CD8-positive, alpha-beta T cell (primary cell): ENCODE measurements at regions of chr4 and their contacts with region 1.

Region 1: DNA sequence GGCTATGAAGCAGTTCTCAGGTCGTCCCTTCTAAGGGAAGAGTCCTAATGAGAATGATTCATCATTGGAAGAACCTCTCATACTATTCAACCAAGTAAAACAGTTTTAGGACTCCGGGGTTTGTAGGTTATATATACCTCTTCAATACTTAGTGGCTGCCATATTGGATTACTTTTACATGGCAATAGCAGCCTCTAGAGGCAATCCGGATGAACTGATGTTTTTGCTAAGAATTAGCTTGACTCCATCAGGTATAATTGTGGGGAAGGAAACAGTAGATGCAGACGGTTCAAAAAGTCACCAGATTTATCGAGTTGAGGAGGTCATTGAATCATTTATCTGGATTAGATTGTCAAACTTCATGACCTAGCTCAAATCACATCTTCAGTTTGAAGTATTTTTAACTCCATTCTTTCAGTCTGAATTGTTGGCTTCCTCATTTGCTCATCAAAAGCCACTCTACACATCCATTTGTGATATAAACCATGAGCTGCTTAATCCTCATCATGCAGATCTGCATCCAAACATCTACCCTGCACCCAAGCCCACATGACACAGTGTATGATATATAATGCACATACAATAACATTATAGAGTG is 28.4 kb downstream of the GUCY1B1 start:
- DNase-seq: peak in 2 of 9 experiments; percentile 14 to 54
- ATAC-seq: peak; percentile 51
- H3K4me3 ChIP-seq: no peak overlapping the region
- H3K4me3 Mint-ChIP-seq: no peak overlapping the region
- H3K27ac ChIP-seq: no peak overlapping the region
- H3K27ac Mint-ChIP-seq: no peak overlapping the region
- H3K4me1 ChIP-seq: no peaks in the 10 kb centered on the region
- H3K4me1 Mint-ChIP-seq: no peaks in the 10 kb centered on the region
- H3K27me3 ChIP-seq: no peaks in the 10 kb centered on the region
- H3K27me3 Mint-ChIP-seq: no peaks in the 10 kb centered on the region
- CTCF ChIP-seq: peak; percentile 42

Region 2: GRCh38 chr4:154982187-154983047 is 804.8 kb before region 1 on chr4:
- CTCF ChIA-PET with region 1: no interaction called
- POLR2A ChIA-PET with region 1: no interaction called
- intact Hi-C with region 1: loop called in 1 of 2 experiments (anchors 5 kb)
- DNase-seq: peak in 5 of 9 experiments; percentile 15 to 48 (median 21)
- ATAC-seq: no peak
- H3K4me3 ChIP-seq: no peak overlapping the region
- H3K4me3 Mint-ChIP-seq: no peak overlapping the region
- H3K27ac ChIP-seq: no peak overlapping the region
- H3K27ac Mint-ChIP-seq: no peak overlapping the region
- H3K4me1 ChIP-seq: no peaks in the 10 kb centered on the region
- H3K4me1 Mint-ChIP-seq: no peaks in the 10 kb centered on the region
- H3K27me3 ChIP-seq: no peaks in the 10 kb centered on the region
- H3K27me3 Mint-ChIP-seq: no peaks in the 10 kb centered on the region
- CTCF ChIP-seq: peak; percentile 28

Region 3: GRCh38 chr4:155442267-155443105 is 344.7 kb before region 1 on chr4:
- CTCF ChIA-PET with region 1: interaction called, 6 read pairs
- POLR2A ChIA-PET with region 1: no interaction called
- intact Hi-C with region 1: loop called (anchors 1 kb)
- DNase-seq: peak; percentile 4 to 62 (median 48)
- ATAC-seq: peak; percentile 56
- H3K4me3 ChIP-seq: no peak overlapping the region
- H3K4me3 Mint-ChIP-seq: no peak overlapping the region
- H3K27ac ChIP-seq: no peak overlapping the region
- H3K27ac Mint-ChIP-seq: no peak overlapping the region
- H3K4me1 ChIP-seq: no peaks in the 10 kb centered on the region
- H3K4me1 Mint-ChIP-seq: no peaks in the 10 kb centered on the region
- H3K27me3 ChIP-seq: no peaks in the 10 kb centered on the region
- H3K27me3 Mint-ChIP-seq: peaks cover 13% of the 10 kb centered on the region
- CTCF ChIP-seq: peak; percentile 89

Region 4: DNA sequence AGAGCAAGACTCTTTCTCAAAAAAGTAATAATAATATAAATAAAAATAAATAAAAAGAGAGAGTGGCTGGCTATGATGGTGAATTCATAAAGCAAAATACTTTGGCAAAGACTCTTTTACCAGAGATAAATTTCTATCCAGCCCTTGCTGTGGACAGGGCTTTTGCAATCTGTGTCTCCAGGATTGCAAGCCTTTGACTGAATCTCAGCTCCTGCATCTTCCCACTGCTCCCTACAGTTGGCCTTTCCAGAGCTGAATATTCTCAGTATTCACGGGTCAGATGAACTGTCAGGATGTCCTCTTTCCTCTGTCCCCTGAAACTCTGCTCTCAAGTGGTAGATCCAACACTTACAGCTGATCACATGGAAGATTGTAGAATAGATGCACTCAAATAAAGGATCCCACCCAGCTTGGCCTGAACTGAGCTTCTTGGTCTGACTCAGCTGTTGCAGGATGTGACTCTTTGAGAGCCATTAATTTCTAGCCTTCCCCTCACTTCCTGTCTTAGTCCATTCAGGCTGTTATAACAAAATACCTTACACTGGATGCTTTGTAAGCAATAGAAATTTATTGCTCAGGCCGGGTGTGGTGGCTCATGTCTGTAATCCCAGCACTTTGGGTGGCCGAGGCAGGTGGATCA is 244.0 kb before region 1 on chr4:
- CTCF ChIA-PET with region 1: no interaction called
- POLR2A ChIA-PET with region 1: no interaction called
- intact Hi-C with region 1: no loop called
- DNase-seq: no peak
- ATAC-seq: no peak
- H3K4me3 ChIP-seq: no peak overlapping the region
- H3K4me3 Mint-ChIP-seq: no peak overlapping the region
- H3K27ac ChIP-seq: no peak overlapping the region
- H3K27ac Mint-ChIP-seq: no peak overlapping the region
- H3K4me1 ChIP-seq: no peaks in the 10 kb centered on the region
- H3K4me1 Mint-ChIP-seq: no peaks in the 10 kb centered on the region
- H3K27me3 ChIP-seq: no peaks in the 10 kb centered on the region
- H3K27me3 Mint-ChIP-seq: no peaks in the 10 kb centered on the region
- CTCF ChIP-seq: no peak

Region 5: DNA sequence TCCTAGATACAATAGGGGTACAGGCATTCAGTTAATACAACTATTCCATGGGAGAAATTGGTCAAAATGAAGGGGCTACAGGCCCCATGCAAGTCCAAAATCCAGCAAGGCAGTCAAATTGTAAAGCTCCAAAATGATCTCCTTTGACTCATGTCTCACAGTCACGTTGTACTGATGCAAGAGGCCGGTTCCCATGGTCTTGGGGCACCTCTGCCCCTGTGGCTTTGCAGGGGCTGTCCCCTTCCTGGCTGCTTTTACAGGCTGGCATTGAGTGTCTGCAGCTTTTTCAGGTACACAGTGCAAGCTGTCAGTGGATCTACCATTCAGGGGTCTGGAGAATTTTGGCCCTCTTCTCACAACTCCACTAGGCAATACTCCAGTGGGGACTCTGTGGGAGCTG is 91.4 kb after region 1 on chr4:
- CTCF ChIA-PET with region 1: no interaction called
- POLR2A ChIA-PET with region 1: no interaction called
- intact Hi-C with region 1: no loop called
- DNase-seq: no peak
- ATAC-seq: no peak
- H3K4me3 ChIP-seq: no peak overlapping the region
- H3K4me3 Mint-ChIP-seq: no peak overlapping the region
- H3K27ac ChIP-seq: no peak overlapping the region
- H3K27ac Mint-ChIP-seq: no peak overlapping the region
- H3K4me1 ChIP-seq: no peaks in the 10 kb centered on the region
- H3K4me1 Mint-ChIP-seq: no peaks in the 10 kb centered on the region
- H3K27me3 ChIP-seq: no peaks in the 10 kb centered on the region
- H3K27me3 Mint-ChIP-seq: no peaks in the 10 kb centered on the region
- CTCF ChIP-seq: no peak

Region 6: GRCh38 chr4:156638925-156639605 is 851.9 kb after region 1 on chr4:
- CTCF ChIA-PET with region 1: no interaction called
- POLR2A ChIA-PET with region 1: no interaction called
- intact Hi-C with region 1: no loop called
- DNase-seq: no peak
- ATAC-seq: no peak
- H3K4me3 ChIP-seq: no peak overlapping the region
- H3K4me3 Mint-ChIP-seq: no peak overlapping the region
- H3K27ac ChIP-seq: no peak overlapping the region
- H3K27ac Mint-ChIP-seq: no peak overlapping the region
- H3K4me1 ChIP-seq: no peaks in the 10 kb centered on the region
- H3K4me1 Mint-ChIP-seq: no peaks in the 10 kb centered on the region
- H3K27me3 ChIP-seq: no peaks in the 10 kb centered on the region
- H3K27me3 Mint-ChIP-seq: no peaks in the 10 kb centered on the region
- CTCF ChIP-seq: no peak